Activated CD4-positive, alpha-beta T cell treated with anti-CD3 and anti-CD28 coated beads for 36 hours (primary cell): ENCODE measurements at regions of chr1 and their contacts with region 1.

Region 1: GRCh38 chr1:1200851-1201810 is 5.3 kb downstream of the TNFRSF18 start:
- DNase-seq: peak; percentile 94
- ATAC-seq: peak; percentile 78
- H3K4me3 Mint-ChIP-seq: peak overlapping the region; percentile 69
- H3K27ac Mint-ChIP-seq: peak overlapping the region; percentile 85
- H3K4me1 Mint-ChIP-seq: peaks cover 12% of the 10 kb centered on the region
- H3K27me3 Mint-ChIP-seq: no peaks in the 10 kb centered on the region

Region 2: DNA sequence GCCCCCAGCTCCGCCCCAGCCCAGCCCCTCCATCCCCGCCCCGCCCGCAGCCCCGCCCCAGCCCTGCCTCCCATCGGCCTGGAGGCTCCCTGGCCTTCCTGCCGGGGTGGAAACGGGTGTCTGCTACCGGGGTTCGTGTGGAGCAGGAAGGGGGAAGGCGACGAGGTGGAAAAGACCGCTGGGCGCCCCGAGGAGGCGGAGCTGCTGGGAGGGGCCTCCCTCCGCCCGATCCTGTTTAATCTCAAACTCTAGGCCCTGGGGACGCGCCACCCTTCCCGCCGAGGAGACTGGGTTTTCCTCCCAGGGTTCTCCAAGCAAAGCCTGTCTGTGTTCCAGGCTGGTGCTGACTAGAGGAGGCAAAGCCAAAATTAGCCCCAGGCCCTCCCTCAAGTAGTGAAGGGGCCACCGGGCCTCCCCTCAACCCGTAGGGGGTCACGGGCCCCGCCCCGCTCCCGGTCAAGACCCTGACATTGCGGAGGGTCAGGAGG is 43.7 kb before region 1 on chr1:
- CTCF ChIA-PET with region 1: no interaction called
- POLR2A ChIA-PET with region 1: no interaction called
- intact Hi-C with region 1: loop called in 1 of 2 experiments (anchors 2 kb)
- DNase-seq: peak; percentile 81
- ATAC-seq: peak; percentile 86
- H3K4me3 Mint-ChIP-seq: peak overlapping the region; percentile 69
- H3K27ac Mint-ChIP-seq: peak overlapping the region; percentile 47
- H3K4me1 Mint-ChIP-seq: no peaks in the 10 kb centered on the region
- H3K27me3 Mint-ChIP-seq: no peaks in the 10 kb centered on the region

Region 3: DNA sequence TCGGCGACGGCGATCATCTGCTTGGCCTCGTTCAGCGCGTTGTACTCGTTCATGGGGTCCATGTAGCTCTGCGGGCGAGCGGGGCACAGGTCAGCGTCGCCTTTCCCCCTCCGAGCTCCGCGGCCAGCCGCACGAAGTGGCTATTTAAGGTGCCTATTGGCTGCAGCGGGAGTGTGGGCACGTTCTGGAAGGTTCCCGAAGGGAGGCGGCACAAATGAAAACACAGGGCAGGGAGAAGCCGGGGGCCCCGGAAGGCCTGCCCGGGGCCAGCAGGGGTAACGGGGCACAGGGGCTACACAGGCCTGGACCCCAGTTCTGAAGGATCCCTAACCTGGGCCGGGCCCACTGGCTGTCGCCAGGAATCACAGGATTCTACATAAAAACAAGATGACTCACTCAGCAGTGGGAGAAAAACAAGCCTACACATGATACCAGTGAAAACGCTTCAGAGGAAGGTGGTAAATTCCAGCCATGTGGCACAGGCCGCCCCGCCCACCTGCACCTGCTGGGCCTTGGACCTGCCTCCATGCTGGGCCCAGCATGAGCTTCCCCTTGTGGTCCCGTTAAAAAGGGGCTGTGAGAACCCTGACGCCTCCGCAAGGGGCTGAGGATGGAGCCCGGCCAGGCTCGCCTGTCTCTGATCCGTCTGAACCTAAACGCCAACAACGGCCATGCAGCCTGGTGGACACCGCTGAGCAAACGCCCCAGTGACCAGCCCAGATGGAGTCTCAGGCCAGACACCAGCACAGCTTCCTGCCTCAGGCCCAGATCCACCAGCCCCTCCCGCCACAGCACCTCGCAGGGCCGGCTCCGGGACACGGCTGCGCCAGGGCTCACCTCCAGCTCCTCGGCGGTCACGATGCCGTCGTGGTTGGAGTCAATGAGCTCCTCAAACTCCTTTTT is 16.7 kb after region 1 on chr1:
- CTCF ChIA-PET with region 1: interaction called, 6 read pairs
- POLR2A ChIA-PET with region 1: no interaction called
- intact Hi-C with region 1: loop called in 1 of 2 experiments (anchors 1 kb)
- DNase-seq: peak; percentile 77
- ATAC-seq: peak; percentile 4
- H3K4me3 Mint-ChIP-seq: peak overlapping the region; percentile 66
- H3K27ac Mint-ChIP-seq: peak overlapping the region; percentile 92
- H3K4me1 Mint-ChIP-seq: peaks cover 49% of the 10 kb centered on the region
- H3K27me3 Mint-ChIP-seq: no peaks in the 10 kb centered on the region